IMR-90 (cell line): ENCODE measurements at regions of chr15 and their contacts with region 1.

Region 1: GRCh38 chr15:48645558-48646330 is at the start of gene FBN1:
- DNase-seq: peak; percentile 90
- ATAC-seq: peak; percentile 74
- H3K4me3 ChIP-seq: peak within 1 kb of the TSS; percentile 90
- H3K27ac ChIP-seq: peak within 1 kb of the TSS; percentile 89
- H3K4me1 ChIP-seq: peaks cover 6% of the 10 kb centered on the region
- H3K27me3 ChIP-seq: no peaks in the 10 kb centered on the region
- CTCF ChIP-seq: no peak
- POLR2A ChIP-seq: peak; percentile 96
- RAD21 ChIP-seq: peak; percentile 2; the same call in 1 of the 2 replicates
- total RNA-seq, gene FBN1: 283 and 326 TPM in 2 replicates

Region 2: DNA sequence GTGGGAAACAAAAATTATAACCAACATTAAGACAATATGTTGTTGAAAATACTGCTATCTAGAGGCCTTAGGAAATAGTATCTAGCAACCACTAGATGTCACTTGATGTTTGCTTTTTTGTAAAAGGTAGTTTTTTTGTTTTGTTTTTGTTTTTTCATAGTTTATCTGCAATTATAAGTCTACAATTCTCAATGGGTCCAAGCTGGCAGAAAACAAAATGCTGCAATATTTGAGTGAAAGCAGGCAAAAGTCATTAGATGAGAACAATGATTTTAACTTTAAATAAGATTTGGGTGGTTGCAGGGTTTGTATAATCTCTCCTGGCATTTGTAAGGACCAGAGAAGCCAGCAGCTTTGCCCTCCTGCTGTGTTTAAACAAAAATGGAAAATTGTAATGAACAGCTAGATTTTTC is 287.5 kb before region 1 on chr15:
- CTCF ChIA-PET with region 1: no interaction called
- POLR2A ChIA-PET with region 1: no interaction called
- dilution Hi-C with region 1: no loop called
- in situ Hi-C with region 1: no loop called
- intact Hi-C with region 1: loop called (anchors 1 kb)
- DNase-seq: peak; percentile 64
- ATAC-seq: peak; percentile 59
- H3K4me3 ChIP-seq: no peak overlapping the region
- H3K27ac ChIP-seq: 0 out of 2 replicates have a peak overlapping the region, but pooled peaks have one; percentile 40
- H3K4me1 ChIP-seq: peaks cover 15% of the 10 kb centered on the region
- H3K27me3 ChIP-seq: no peaks in the 10 kb centered on the region
- CTCF ChIP-seq: peak; percentile 75
- POLR2A ChIP-seq: no peak
- RAD21 ChIP-seq: peak; percentile 81

Region 3: GRCh38 chr15:48373821-48374451 is 271.8 kb before region 1 on chr15:
- CTCF ChIA-PET with region 1: no interaction called
- POLR2A ChIA-PET with region 1: no interaction called
- dilution Hi-C with region 1: no loop called
- in situ Hi-C with region 1: no loop called
- intact Hi-C with region 1: no loop called
- DNase-seq: peak; percentile 81
- ATAC-seq: peak; percentile 85
- H3K4me3 ChIP-seq: no peak overlapping the region
- H3K27ac ChIP-seq: no peak overlapping the region
- H3K4me1 ChIP-seq: peaks cover 2% of the 10 kb centered on the region; the same call in 1 of the 2 replicates
- H3K27me3 ChIP-seq: no peaks in the 10 kb centered on the region
- CTCF ChIP-seq: no peak
- POLR2A ChIP-seq: no peak
- RAD21 ChIP-seq: no peak

Region 4: DNA sequence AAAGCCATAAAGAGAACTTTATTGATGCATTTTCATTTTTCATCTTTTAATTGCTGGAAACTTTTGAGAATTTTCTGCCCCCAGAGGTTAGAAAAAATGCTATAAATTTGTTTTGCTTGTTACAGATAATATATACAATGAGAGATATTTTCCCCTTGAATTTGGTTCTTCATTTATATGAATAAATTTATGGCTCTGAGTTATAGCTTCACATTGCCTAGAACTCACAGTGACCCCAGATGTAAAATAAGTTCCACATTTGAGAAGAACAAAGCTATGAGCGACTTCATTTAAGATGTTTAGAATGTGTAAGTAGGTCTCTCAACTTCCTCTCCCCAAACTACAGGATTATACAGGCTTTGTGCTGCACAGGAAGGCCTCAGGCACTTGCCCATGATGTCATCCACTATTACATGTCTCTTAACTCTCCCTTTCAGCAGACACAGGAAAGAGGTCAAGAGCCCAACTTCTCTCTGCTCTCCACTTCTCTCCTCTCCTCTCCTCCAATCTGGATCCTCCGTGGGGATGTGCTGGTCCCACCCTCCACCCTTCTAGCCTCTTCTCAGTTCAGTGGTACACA is 221.8 kb before region 1 on chr15:
- CTCF ChIA-PET with region 1: no interaction called
- POLR2A ChIA-PET with region 1: no interaction called
- dilution Hi-C with region 1: no loop called
- in situ Hi-C with region 1: no loop called
- intact Hi-C with region 1: loop called (anchors 10 kb)
- DNase-seq: peak; percentile 72
- ATAC-seq: peak; percentile 53
- H3K4me3 ChIP-seq: no peak overlapping the region
- H3K27ac ChIP-seq: peak overlapping the region; percentile 1; the same call in 1 of the 2 replicates
- H3K4me1 ChIP-seq: peaks cover 15% of the 10 kb centered on the region
- H3K27me3 ChIP-seq: no peaks in the 10 kb centered on the region
- CTCF ChIP-seq: no peak
- POLR2A ChIP-seq: no peak
- RAD21 ChIP-seq: no peak

Region 5: DNA sequence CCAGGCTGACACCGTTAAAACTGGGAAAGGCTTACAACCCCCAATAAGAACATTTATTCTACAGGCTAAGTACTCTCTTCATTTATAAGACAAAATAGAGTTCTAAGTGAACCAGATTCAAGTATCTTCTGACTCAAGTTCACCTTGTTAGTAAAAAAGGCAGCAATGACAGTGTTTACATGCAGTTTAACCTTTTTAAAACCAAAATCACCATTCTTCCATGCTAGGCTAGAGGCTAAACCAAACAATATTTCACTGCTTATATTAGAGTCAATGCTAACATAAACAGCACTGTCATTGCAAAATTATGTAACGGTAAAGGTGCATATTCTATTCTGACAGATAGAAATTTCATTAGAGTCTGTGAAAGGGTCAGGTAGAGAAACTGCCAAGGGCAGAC is 118.2 kb before region 1 on chr15:
- CTCF ChIA-PET with region 1: no interaction called
- POLR2A ChIA-PET with region 1: no interaction called
- dilution Hi-C with region 1: no loop called
- in situ Hi-C with region 1: no loop called
- intact Hi-C with region 1: loop called (anchors 1 kb)
- DNase-seq: peak; percentile 56
- ATAC-seq: peak; percentile 60
- H3K4me3 ChIP-seq: no peak overlapping the region
- H3K27ac ChIP-seq: peak overlapping the region; percentile 10; the same call in 1 of the 2 replicates
- H3K4me1 ChIP-seq: peaks cover 11% of the 10 kb centered on the region
- H3K27me3 ChIP-seq: no peaks in the 10 kb centered on the region
- CTCF ChIP-seq: no peak
- POLR2A ChIP-seq: no peak
- RAD21 ChIP-seq: no peak

Region 6: DNA sequence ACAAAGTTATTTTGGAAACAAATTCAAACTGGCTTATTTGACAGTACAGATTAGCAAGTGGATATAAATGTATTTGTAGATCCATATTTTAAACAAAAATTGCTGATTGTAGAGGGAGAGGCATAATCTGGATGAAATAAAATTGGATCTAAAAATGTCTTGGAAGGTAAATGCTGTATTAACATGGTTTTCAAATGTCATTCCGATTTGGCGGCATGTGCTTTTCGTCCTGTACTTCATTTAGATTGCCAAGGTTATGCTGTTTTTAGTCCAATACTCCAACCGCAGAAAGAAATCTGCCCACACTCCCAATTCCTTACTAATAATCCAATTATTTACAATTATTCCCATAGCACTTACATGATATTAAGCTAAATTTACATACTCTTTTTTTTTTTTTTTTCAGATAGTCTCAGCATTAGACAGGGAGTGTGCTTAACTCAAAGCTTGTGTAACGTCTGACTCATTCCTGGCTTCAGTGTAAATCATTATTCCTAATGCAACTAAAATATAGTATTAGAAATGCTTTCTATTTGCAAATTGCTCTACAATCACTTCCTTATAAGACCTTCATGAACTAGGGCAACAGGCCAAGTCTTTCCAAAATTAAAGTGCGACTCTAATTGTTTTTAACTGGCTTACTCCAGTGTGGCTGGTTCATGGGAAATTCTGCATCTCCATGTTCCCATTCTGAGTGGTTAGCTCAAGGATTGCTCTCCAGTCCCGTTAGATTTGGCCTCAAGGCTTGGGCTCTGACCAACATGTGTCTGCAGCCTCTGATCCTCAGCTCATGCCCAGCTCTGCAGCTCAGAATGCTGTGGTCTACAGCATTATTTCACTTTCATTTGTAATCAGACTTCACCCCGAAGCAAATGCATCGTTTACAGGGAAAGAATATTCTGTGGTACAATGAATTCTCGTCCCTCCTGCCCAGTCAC is 104.1 kb before region 1 on chr15:
- CTCF ChIA-PET with region 1: no interaction called
- POLR2A ChIA-PET with region 1: interaction called, 3 read pairs
- dilution Hi-C with region 1: no loop called
- in situ Hi-C with region 1: no loop called
- intact Hi-C with region 1: loop called (anchors 5 kb)
- DNase-seq: peak; percentile 88
- ATAC-seq: peak; percentile 86
- H3K4me3 ChIP-seq: peak overlapping the region; percentile 27; the same call in 1 of the 2 replicates
- H3K27ac ChIP-seq: peak overlapping the region; percentile 68
- H3K4me1 ChIP-seq: peaks cover 15% of the 10 kb centered on the region
- H3K27me3 ChIP-seq: no peaks in the 10 kb centered on the region
- CTCF ChIP-seq: no peak
- POLR2A ChIP-seq: no peak
- RAD21 ChIP-seq: peak; percentile 4; the same call in 1 of the 2 replicates

Region 7: GRCh38 chr15:48800811-48801455 is 155.2 kb after region 1 on chr15:
- CTCF ChIA-PET with region 1: interaction called, 5 read pairs
- POLR2A ChIA-PET with region 1: interaction called, 3 read pairs
- dilution Hi-C with region 1: no loop called
- in situ Hi-C with region 1: no loop called
- intact Hi-C with region 1: loop called (anchors 1 kb)
- DNase-seq: peak; percentile 43
- ATAC-seq: no peak
- H3K4me3 ChIP-seq: no peak overlapping the region
- H3K27ac ChIP-seq: no peak overlapping the region
- H3K4me1 ChIP-seq: peaks cover 5% of the 10 kb centered on the region
- H3K27me3 ChIP-seq: no peaks in the 10 kb centered on the region
- CTCF ChIP-seq: peak; percentile 51
- POLR2A ChIP-seq: no peak
- RAD21 ChIP-seq: peak; percentile 48; the same call in 1 of the 2 replicates

Region 8: DNA sequence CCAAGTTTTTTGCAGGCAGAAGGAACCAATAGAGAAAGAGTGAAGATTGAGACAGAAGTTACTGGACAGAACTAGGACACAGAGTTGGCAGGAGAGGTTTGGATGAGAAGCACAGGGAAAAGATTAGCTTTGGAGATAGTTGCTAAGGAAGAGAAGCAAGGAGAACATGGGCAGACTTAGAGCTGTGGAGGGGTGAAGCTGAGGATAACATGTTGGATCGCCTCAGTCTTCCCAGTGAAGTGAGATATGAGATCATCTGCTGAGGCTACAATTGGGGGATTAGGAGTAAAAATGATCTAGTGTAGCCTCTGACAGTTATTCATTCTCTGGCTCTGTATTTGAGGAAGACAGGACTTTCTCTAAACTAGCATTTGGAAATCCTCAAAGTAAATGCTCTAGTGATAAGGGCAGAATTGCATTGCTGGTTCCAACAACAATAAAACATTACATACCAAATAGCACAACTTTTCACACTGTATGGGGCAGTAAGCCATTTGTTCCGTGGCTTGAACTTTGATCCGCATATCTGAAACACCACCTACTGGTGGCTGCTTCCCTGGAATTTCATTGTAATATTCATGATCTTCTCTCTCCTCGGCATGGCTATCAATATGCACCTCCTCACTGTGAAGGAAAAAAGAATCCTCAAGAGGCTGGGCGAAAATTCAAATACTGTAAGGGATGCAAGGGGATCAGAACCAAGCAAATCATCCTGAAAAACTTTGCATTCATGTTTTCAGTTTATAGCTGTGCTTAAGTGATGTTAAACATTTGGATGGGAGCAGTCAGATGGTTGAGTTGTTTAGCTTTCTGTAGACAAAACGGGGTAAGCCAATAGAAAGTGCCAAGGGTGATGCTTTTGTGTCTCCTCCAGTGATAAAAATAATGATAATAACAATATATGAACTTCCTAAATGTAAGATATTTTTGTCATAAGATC is 210.0 kb after region 1 on chr15:
- CTCF ChIA-PET with region 1: no interaction called
- POLR2A ChIA-PET with region 1: no interaction called
- dilution Hi-C with region 1: no loop called
- in situ Hi-C with region 1: no loop called
- intact Hi-C with region 1: loop called (anchors 2 kb)
- DNase-seq: peak; percentile 62
- ATAC-seq: peak; percentile 70
- H3K4me3 ChIP-seq: no peak overlapping the region
- H3K27ac ChIP-seq: no peak overlapping the region; the same call in 1 of the 2 replicates
- H3K4me1 ChIP-seq: peaks cover 14% of the 10 kb centered on the region
- H3K27me3 ChIP-seq: no peaks in the 10 kb centered on the region
- CTCF ChIP-seq: peak; percentile 56
- POLR2A ChIP-seq: no peak
- RAD21 ChIP-seq: peak; percentile 54; the same call in 1 of the 2 replicates

Region 9: GRCh38 chr15:49046220-49047102 is 400.7 kb after region 1 on chr15 and contains the start of gene SECISBP2L:
- CTCF ChIA-PET with region 1: no interaction called
- POLR2A ChIA-PET with region 1: no interaction called
- dilution Hi-C with region 1: no loop called
- in situ Hi-C with region 1: no loop called
- intact Hi-C with region 1: no loop called
- DNase-seq: peak; percentile 92
- ATAC-seq: peak; percentile 97
- H3K4me3 ChIP-seq: peak within 1 kb of the TSS; percentile 97
- H3K27ac ChIP-seq: peak within 1 kb of the TSS; percentile 77
- H3K4me1 ChIP-seq: no peaks in the 10 kb centered on the region
- H3K27me3 ChIP-seq: no peaks in the 10 kb centered on the region
- CTCF ChIP-seq: peak; percentile 36
- POLR2A ChIP-seq: peak; percentile 74
- RAD21 ChIP-seq: peak; percentile 23; the same call in 1 of the 2 replicates
- total RNA-seq, gene SECISBP2L: 34.1 and 45.0 TPM in 2 replicates